ENCODE measurements at regions of chrX and their contacts with region 1.

Region 1: DNA sequence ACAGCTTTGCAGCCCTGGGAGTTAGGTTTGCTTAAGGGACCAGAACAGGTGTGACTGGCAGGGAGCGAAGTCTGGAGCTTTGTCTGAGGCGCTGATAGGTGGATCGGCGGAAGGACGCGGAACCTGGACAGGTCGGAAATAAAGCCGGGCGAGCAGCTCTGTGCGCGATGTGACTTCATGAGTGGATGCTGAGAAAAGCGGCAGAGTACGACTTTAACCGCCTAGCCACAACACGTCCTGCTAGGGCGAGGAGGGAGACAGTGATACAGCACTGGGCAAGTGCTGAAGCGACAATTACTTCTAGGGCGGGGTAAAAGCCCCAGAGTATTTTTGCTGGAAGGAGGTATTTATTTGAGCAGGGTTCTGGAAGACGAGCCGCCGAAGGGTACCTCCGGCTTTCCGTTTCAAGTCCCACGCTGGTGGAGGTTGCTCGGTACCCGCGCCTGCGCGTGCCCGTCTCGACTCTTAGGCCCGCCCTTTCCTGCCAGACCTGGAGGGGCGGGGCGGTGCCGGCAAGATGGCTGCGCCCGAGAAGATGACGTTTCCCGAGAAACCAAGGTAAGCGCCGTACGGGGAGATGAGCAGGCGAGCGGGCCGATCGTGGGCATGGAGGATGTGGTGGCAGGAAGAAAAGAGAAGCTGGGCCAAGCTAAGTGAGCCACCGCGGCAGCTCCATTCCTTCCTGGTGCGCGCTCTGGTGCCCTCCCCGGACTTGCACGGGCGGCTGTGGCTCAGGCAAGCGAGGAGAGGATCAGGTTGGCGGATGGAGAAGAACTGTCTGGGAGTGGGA is at the start of gene ZRSR2:
- DNase-seq: peak; percentile 96
- total RNA-seq, gene ZRSR2: 10.7 TPM

Region 2: DNA sequence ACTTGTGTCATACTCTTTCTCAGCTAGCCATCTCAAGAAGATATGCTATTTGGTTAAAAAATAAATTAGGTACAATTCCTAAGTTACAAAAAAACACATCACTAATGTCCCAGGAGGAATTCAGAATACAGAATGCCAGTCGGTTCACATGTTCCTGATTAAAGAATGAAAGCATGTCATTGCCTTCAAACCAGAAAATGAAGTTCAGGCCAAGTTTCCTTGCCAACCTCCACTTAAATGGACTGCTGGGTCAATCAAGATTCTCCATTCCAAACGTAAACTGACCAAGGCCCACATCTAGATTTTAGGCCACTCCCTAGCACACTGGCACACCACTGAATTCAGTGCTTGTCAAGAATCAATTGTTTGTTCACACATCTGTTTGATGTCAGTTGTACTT is 461.4 kb before region 1 on chrX:
- intact Hi-C with region 1: no loop called
- DNase-seq: no peak

Region 3: GRCh38 chrX:15674841-15675489 is 115.2 kb before region 1 on chrX:
- intact Hi-C with region 1: loop called (anchors 10 kb)
- DNase-seq: peak; percentile 96

Region 4: GRCh38 chrX:15838017-15838416 is 47.8 kb after region 1 on chrX:
- intact Hi-C with region 1: no loop called
- DNase-seq: no peak

Region 5: GRCh38 chrX:15854712-15855567 is 64.8 kb after region 1 on chrX and contains the start of gene AP1S2:
- intact Hi-C with region 1: loop called (anchors 5 kb)
- DNase-seq: peak; percentile 97
- total RNA-seq, gene AP1S2: 198 TPM

Region 6: GRCh38 chrX:16033331-16033730 is 243.2 kb after region 1 on chrX:
- intact Hi-C with region 1: no loop called
- DNase-seq: no peak